B cell (primary cell): ENCODE measurements at regions of chr2 and their contacts with region 1.

Region 1: GRCh38 chr2:201451292-201452057 is at the starts of genes STRADB and TRAK2:
- DNase-seq: peak; percentile 98
- ATAC-seq: peak; percentile 92
- H3K4me3 ChIP-seq: peak within 1 kb of the TSS; percentile 61 to 94 (median 69)
- H3K4me3 Mint-ChIP-seq: peak within 1 kb of the TSS; percentile 97
- H3K27ac ChIP-seq: peak within 1 kb of the TSS; percentile 54 to 88
- H3K27ac Mint-ChIP-seq: peak within 1 kb of the TSS; percentile 96
- H3K4me1 ChIP-seq: peaks cover 39 to 43% of the 10 kb centered on the region in 2 donors
- H3K4me1 Mint-ChIP-seq: peaks cover 41% of the 10 kb centered on the region
- H3K27me3 ChIP-seq: no peaks in the 10 kb centered on the region
- H3K27me3 Mint-ChIP-seq: no peaks in the 10 kb centered on the region
- CTCF ChIP-seq: peak; percentile 48
- total RNA-seq, gene STRADB: 17.5 and 20.6 TPM in 2 replicates
- total RNA-seq, gene TRAK2: 21.6 and 24.5 TPM in 2 replicates

Region 2: DNA sequence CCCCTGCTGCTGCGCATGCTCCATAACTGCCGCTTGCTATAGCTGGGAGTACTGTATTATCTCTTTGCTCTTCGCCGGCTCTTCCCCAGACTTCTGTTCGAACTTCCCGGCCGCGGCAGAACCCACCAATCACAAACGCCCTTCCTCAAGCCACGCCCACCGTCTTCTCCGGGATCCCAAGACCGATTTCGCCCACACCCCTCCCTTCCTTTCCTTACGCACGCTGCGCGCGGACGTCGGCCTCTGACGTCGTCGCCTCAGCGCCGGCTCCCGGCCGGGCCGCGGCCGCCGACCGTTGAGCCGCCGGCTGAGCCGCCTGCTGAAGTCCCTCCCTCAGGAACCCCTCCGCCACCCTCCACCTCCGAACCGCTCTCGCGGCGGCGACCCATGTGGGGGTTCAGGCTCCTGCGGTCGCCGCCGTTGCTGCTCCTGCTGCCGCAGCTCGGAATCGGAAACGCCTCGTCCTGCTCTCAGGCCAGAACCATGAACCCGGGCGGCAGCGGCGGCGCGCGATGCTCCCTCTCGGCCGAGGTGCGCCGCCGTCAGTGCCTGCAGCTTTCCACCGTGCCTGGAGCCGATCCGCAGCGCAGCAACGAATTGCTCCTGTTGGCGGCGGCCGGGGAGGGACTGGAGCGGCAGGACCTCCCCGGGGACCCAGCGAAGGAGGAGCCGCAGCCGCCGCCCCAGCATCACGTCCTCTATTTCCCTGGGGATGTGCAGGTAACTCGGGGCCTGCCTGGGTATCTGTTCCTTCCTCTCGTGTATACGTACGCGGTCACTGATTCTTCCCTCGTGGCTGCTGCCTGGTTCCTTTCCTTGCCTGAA is 1540.2 kb before region 1 on chr2 and contains the start of gene C2orf69:
- CTCF ChIA-PET with region 1: no interaction called
- POLR2A ChIA-PET with region 1: no interaction called
- intact Hi-C with region 1: loop called (anchors 1 kb)
- DNase-seq: peak; percentile 96
- ATAC-seq: peak; percentile 86
- H3K4me3 ChIP-seq: peak within 1 kb of the TSS; percentile 71 to 98 (median 87)
- H3K4me3 Mint-ChIP-seq: peak within 1 kb of the TSS; percentile 89
- H3K27ac ChIP-seq: peak within 1 kb of the TSS; percentile 97 to 98
- H3K27ac Mint-ChIP-seq: peak within 1 kb of the TSS; percentile 87
- H3K4me1 ChIP-seq: peaks cover 12 to 26% of the 10 kb centered on the region in 2 donors
- H3K4me1 Mint-ChIP-seq: peaks cover 43% of the 10 kb centered on the region
- H3K27me3 ChIP-seq: no peaks in the 10 kb centered on the region
- H3K27me3 Mint-ChIP-seq: no peaks in the 10 kb centered on the region
- CTCF ChIP-seq: no peak
- total RNA-seq, gene C2orf69: 12.8 and 12.9 TPM in 2 replicates

Region 3: DNA sequence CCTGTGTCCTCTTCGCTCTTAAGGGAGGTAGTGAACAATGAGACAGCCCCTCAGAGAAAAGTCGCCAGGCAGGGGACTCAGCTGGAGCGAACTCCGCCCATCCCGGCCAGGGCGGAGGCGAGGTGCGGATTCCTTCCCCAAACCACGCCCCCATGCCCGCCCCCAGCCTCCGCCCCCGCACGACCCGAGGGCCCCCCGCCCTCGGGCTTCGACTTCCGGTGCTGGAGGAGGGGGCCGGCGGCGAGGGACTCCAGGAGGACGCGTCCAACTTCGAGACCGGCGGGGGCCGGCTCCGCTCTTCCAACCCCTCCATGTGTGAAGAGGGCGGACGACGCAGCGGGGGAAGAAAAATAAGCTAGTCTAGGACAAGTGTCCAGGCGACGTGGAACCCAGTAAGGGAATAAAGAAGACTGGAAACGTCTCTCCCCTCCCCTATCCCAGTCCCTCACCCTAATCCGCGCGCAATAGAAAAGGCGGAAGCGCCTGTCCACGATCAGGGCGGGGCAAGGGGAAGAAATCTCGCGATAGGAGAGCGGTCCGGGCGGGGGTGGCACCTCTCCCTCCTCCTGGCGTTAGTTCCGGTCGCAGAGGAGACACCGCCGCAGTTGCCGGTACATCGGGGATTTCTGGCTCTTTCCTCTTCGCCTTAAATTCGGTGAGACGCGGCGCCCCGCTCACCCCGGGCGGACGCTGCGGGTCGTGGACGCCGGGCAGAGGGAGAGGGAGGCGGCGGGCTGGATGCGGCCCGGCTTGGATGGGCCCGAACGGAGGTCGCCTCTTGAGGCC is 639.9 kb before region 1 on chr2 and contains the start of gene BZW1:
- CTCF ChIA-PET with region 1: no interaction called
- POLR2A ChIA-PET with region 1: interaction called, 3 read pairs
- intact Hi-C with region 1: loop called (anchors 1 kb)
- DNase-seq: peak; percentile 99
- ATAC-seq: peak; percentile 80
- H3K4me3 ChIP-seq: peak within 1 kb of the TSS; percentile 75 to 93 (median 92)
- H3K4me3 Mint-ChIP-seq: peak within 1 kb of the TSS; percentile 94
- H3K27ac ChIP-seq: peak within 1 kb of the TSS; percentile 99
- H3K27ac Mint-ChIP-seq: peak within 1 kb of the TSS; percentile 99
- H3K4me1 ChIP-seq: peaks cover 19 to 24% of the 10 kb centered on the region in 2 donors
- H3K4me1 Mint-ChIP-seq: peaks cover 39% of the 10 kb centered on the region
- H3K27me3 ChIP-seq: no peaks in the 10 kb centered on the region
- H3K27me3 Mint-ChIP-seq: no peaks in the 10 kb centered on the region
- CTCF ChIP-seq: no peak
- total RNA-seq, gene BZW1: 109 and 120 TPM in 2 replicates

Region 4: GRCh38 chr2:201257956-201258665 is 193.4 kb before region 1 on chr2:
- CTCF ChIA-PET with region 1: no interaction called
- POLR2A ChIA-PET with region 1: interaction called, 5 read pairs
- intact Hi-C with region 1: loop called (anchors 2 kb)
- DNase-seq: peak; percentile 94
- ATAC-seq: peak; percentile 67
- H3K4me3 ChIP-seq: peak overlapping the region; percentile 39 to 90 (median 58)
- H3K4me3 Mint-ChIP-seq: peak overlapping the region; percentile 87
- H3K27ac ChIP-seq: peak overlapping the region; percentile 97 to 98
- H3K27ac Mint-ChIP-seq: peak overlapping the region; percentile 99
- H3K4me1 ChIP-seq: peaks cover 58 to 84% of the 10 kb centered on the region in 2 donors
- H3K4me1 Mint-ChIP-seq: peaks cover 73% of the 10 kb centered on the region
- H3K27me3 ChIP-seq: no peaks in the 10 kb centered on the region
- H3K27me3 Mint-ChIP-seq: no peaks in the 10 kb centered on the region
- CTCF ChIP-seq: no peak

Region 5: GRCh38 chr2:201433394-201433995 is 18.0 kb before region 1 on chr2:
- CTCF ChIA-PET with region 1: no interaction called
- POLR2A ChIA-PET with region 1: no interaction called
- intact Hi-C with region 1: no loop called
- DNase-seq: no peak
- ATAC-seq: no peak
- H3K4me3 ChIP-seq: no peak overlapping the region
- H3K4me3 Mint-ChIP-seq: no peak overlapping the region
- H3K27ac ChIP-seq: peak overlapping the region in 1 of 2 donors; percentile 50
- H3K27ac Mint-ChIP-seq: peak overlapping the region; percentile 32
- H3K4me1 ChIP-seq: peaks cover 17 to 22% of the 10 kb centered on the region in 2 donors
- H3K4me1 Mint-ChIP-seq: peaks cover 42% of the 10 kb centered on the region
- H3K27me3 ChIP-seq: no peaks in the 10 kb centered on the region
- H3K27me3 Mint-ChIP-seq: no peaks in the 10 kb centered on the region
- CTCF ChIP-seq: no peak

Region 6: DNA sequence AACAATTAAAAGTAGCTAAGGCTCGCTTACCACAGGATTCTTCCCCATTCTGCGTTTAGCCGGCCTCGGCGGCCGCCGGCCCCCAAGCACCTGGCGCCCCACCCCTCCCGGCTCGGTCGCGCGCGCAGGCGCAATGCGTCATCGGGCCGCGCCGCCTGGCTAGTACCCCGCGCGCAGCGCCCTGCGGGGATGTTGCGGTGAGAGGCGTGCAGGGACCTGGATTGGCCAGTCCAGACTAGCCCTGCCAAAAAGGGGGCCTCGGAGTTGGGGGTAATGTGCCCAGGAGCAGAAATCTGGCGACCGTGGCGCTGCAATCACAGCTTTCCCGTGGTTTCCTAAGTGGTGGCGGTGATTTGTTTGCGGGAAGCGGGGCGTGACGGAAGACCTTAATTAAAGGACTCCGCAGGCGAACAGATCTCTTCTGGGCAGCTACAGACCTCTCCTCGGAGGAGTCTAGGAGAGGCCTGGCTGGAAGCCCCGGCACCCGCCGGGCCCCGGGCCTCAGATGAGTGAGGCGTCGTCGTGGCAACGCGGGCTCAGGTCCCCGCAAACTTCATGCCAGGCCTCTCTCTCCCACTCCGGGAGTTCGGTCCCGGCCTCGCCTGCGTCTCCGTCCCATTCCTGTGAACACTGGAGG is 191.2 kb after region 1 on chr2:
- CTCF ChIA-PET with region 1: no interaction called
- POLR2A ChIA-PET with region 1: interaction called, 8 read pairs
- intact Hi-C with region 1: loop called (anchors 1 kb)
- DNase-seq: peak; percentile 92
- ATAC-seq: peak; percentile 86
- H3K4me3 ChIP-seq: peak overlapping the region; percentile 73 to 100 (median 95)
- H3K4me3 Mint-ChIP-seq: peak overlapping the region; percentile 96
- H3K27ac ChIP-seq: peak overlapping the region; percentile 89 to 93
- H3K27ac Mint-ChIP-seq: peak overlapping the region; percentile 97
- H3K4me1 ChIP-seq: peaks cover 10 to 14% of the 10 kb centered on the region in 2 donors
- H3K4me1 Mint-ChIP-seq: peaks cover 12% of the 10 kb centered on the region
- H3K27me3 ChIP-seq: peaks cover 0 to 2% (median 0%) of the 10 kb centered on the region in 4 experiments
- H3K27me3 Mint-ChIP-seq: peaks cover 7% of the 10 kb centered on the region
- CTCF ChIP-seq: no peak

Region 7: DNA sequence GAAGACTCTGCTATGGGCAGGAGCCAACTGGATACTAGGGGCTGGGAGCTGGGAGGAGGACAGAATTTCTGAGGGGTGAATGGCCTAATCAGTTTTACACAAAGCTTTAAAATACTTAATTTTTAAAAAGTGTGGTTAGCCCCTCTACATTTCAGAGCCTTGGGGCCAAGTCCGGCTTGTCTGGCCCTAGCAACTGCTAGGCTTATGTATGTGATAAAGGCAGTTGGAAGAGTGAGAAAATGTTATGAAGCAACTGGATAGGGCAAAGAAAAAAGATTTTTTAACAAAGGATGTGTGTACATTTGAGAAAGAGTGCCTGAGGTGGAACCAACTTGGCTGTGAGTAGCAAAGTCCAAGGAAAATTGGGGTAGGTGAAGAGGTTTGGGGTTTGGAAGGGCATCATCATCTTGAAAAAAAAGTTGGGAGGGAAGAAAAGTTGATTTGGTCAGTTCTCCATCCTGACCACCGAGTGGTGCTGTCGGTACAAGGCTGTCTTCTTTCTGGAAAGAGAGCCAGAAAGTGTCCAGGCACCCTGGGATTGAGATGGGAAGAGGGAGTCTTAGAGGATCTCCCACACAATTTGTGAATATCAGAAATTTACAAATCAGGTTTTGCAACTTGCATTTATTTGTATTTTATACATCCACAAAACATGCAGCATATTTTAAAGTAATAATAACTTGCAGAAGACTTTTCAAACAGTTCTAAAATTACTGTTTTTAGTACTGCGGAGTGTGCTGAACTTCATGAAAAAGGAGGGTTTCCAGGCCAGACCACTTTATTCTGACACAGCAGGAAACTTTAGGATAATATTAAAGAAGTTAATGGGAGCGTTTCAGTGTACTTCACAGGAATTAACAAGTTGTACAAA is 344.4 kb after region 1 on chr2:
- CTCF ChIA-PET with region 1: no interaction called
- POLR2A ChIA-PET with region 1: no interaction called
- intact Hi-C with region 1: no loop called
- DNase-seq: no peak
- ATAC-seq: no peak
- H3K4me3 ChIP-seq: no peak overlapping the region
- H3K4me3 Mint-ChIP-seq: no peak overlapping the region
- H3K27ac ChIP-seq: no peak overlapping the region
- H3K27ac Mint-ChIP-seq: no peak overlapping the region
- H3K4me1 ChIP-seq: no peaks in the 10 kb centered on the region
- H3K4me1 Mint-ChIP-seq: no peaks in the 10 kb centered on the region
- H3K27me3 ChIP-seq: peaks cover 0 to 5% (median 0%) of the 10 kb centered on the region in 4 experiments
- H3K27me3 Mint-ChIP-seq: peaks cover 17% of the 10 kb centered on the region
- CTCF ChIP-seq: peak; percentile 27

Region 8: GRCh38 chr2:202238234-202239197 is 787.0 kb after region 1 on chr2 and contains the start of gene SUMO1:
- CTCF ChIA-PET with region 1: no interaction called
- POLR2A ChIA-PET with region 1: no interaction called
- intact Hi-C with region 1: loop called (anchors 1 kb)
- DNase-seq: peak; percentile 92
- ATAC-seq: peak; percentile 95
- H3K4me3 ChIP-seq: peak within 1 kb of the TSS; percentile 75 to 88 (median 83)
- H3K4me3 Mint-ChIP-seq: peak within 1 kb of the TSS; percentile 96
- H3K27ac ChIP-seq: peak within 1 kb of the TSS; percentile 78 to 89
- H3K27ac Mint-ChIP-seq: peak within 1 kb of the TSS; percentile 91
- H3K4me1 ChIP-seq: peaks cover 12 to 21% of the 10 kb centered on the region in 2 donors
- H3K4me1 Mint-ChIP-seq: peaks cover 32% of the 10 kb centered on the region
- H3K27me3 ChIP-seq: peaks cover 0 to 1% (median 0%) of the 10 kb centered on the region in 4 experiments
- H3K27me3 Mint-ChIP-seq: no peaks in the 10 kb centered on the region
- CTCF ChIP-seq: no peak
- total RNA-seq, gene SUMO1: 49.1 and 60.0 TPM in 2 replicates